ENCODE measurements at regions of chr13 and their contacts with region 1.

Region 1: GRCh38 chr13:106143930-106144709 is 391.3 kb downstream of the EFNB2 start:
- DNase-seq: peak; percentile 88
- ATAC-seq: peak; percentile 48
- H3K4me3 ChIP-seq: no peak overlapping the region
- H3K27ac ChIP-seq: peak overlapping the region; percentile 88
- H3K4me1 ChIP-seq: peaks cover 41% of the 10 kb centered on the region
- H3K27me3 ChIP-seq: no peaks in the 10 kb centered on the region
- CTCF ChIP-seq: no peak

Region 2: GRCh38 chr13:104534847-104535246 is 1609.3 kb before region 1 on chr13:
- CTCF ChIA-PET with region 1: interaction called, 26 read pairs
- POLR2A ChIA-PET with region 1: no interaction called
- intact Hi-C with region 1: no loop called
- DNase-seq: peak; percentile 18
- ATAC-seq: no peak
- H3K4me3 ChIP-seq: no peak overlapping the region
- H3K27ac ChIP-seq: no peak overlapping the region
- H3K4me1 ChIP-seq: no peaks in the 10 kb centered on the region
- H3K27me3 ChIP-seq: no peaks in the 10 kb centered on the region
- CTCF ChIP-seq: peak; percentile 33; the same call in 1 of the 2 replicates

Region 3: GRCh38 chr13:105196052-105196451 is 948.1 kb before region 1 on chr13:
- CTCF ChIA-PET with region 1: no interaction called
- POLR2A ChIA-PET with region 1: no interaction called
- intact Hi-C with region 1: no loop called
- DNase-seq: peak; percentile 11
- ATAC-seq: no peak
- H3K4me3 ChIP-seq: no peak overlapping the region
- H3K27ac ChIP-seq: no peak overlapping the region
- H3K4me1 ChIP-seq: no peaks in the 10 kb centered on the region
- H3K27me3 ChIP-seq: no peaks in the 10 kb centered on the region
- CTCF ChIP-seq: no peak

Region 4: DNA sequence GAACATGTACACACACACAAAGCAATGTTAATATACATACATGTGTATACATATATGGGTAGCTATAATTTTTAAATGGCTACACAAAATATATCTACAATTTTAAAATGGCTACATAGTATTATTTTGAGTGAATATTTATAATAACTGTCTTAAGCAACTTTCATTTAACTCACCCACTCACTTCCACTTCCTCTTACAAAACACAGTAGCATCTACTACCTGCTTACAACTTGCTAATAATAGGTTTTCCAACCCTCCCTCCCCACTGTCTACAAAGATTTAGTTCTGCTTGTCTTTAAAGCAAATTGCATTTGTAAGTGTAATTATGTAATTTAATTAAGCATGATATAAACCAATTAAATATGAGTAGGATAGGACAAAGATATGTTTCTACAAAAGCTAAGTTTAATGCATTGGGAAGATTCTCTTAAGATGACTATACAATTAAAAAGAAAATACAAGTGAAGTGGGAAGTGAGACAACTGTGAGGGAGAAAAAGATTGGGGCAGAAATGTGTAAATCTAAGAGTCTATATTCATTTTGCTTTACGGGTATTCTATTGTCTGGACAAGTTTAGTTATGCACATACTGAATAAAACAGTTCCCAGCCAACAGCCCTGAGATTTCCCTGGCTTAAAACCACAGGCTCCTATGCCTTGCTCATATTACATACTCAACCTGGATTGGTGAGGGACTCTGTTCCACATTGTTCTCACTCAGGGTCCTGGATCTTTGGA is 191.7 kb before region 1 on chr13:
- CTCF ChIA-PET with region 1: no interaction called
- POLR2A ChIA-PET with region 1: no interaction called
- intact Hi-C with region 1: no loop called
- DNase-seq: no peak
- ATAC-seq: no peak
- H3K4me3 ChIP-seq: no peak overlapping the region
- H3K27ac ChIP-seq: no peak overlapping the region
- H3K4me1 ChIP-seq: no peaks in the 10 kb centered on the region
- H3K27me3 ChIP-seq: no peaks in the 10 kb centered on the region
- CTCF ChIP-seq: no peak

Region 5: DNA sequence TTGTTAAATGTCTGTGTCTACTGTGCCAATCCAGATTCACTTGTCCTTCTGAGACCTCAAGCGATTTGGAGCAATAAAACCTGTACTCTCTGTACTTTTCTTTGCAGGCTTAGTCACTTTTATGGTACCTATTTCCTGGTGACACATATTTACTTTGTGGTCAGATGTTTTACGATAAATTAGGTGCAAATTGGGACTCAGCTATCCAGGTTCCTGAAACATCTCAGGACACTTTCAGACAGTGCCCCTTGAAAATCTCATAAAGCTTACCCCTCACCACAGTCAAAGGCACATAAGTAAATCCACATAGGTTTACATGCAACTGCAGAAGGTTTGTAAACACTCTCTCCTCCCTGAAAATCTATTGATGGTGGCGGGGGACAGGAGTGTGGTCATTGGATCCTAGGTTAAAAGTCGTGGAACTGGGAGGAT is 47.4 kb before region 1 on chr13:
- CTCF ChIA-PET with region 1: no interaction called
- POLR2A ChIA-PET with region 1: no interaction called
- intact Hi-C with region 1: loop called (anchors 2 kb)
- DNase-seq: peak; percentile 90
- ATAC-seq: peak; percentile 72
- H3K4me3 ChIP-seq: peak overlapping the region; percentile 34; the same call in 1 of the 2 replicates
- H3K27ac ChIP-seq: peak overlapping the region; percentile 95
- H3K4me1 ChIP-seq: peaks cover 65% of the 10 kb centered on the region
- H3K27me3 ChIP-seq: no peaks in the 10 kb centered on the region
- CTCF ChIP-seq: no peak

Region 6: DNA sequence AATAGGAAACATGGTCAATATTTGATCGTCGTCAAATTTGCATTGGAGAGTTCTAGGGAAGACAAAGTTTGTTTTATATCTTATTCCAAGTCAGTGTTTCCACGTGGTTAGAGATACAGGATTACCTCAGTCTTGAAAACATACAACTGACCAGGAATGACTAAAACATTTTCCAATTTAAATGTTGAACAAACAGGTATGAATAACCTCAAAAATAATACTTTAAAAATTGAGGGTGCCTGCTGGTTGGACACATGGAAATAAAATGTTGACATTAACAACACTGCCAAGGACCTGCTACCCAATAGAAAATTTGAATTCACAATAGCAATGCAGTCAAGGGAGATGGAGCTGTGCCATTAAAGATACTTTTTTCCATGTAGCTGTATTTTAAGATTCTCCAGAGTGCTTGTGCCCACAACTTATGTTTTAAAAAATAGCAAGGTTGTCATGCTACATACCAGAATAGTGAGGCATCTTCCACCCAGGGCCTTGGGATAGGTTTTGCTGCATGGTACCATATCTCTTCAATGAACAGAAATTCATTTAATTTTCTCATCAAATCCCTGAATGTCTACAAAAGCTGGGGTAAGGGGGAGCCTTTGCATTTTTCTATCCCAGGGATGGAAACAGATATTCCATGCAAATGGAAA is 130.6 kb after region 1 on chr13:
- CTCF ChIA-PET with region 1: interaction called, 11 read pairs
- POLR2A ChIA-PET with region 1: no interaction called
- intact Hi-C with region 1: no loop called
- DNase-seq: peak; percentile 31
- ATAC-seq: no peak
- H3K4me3 ChIP-seq: no peak overlapping the region
- H3K27ac ChIP-seq: no peak overlapping the region
- H3K4me1 ChIP-seq: peaks cover 17% of the 10 kb centered on the region
- H3K27me3 ChIP-seq: no peaks in the 10 kb centered on the region
- CTCF ChIP-seq: no peak

Region 7: DNA sequence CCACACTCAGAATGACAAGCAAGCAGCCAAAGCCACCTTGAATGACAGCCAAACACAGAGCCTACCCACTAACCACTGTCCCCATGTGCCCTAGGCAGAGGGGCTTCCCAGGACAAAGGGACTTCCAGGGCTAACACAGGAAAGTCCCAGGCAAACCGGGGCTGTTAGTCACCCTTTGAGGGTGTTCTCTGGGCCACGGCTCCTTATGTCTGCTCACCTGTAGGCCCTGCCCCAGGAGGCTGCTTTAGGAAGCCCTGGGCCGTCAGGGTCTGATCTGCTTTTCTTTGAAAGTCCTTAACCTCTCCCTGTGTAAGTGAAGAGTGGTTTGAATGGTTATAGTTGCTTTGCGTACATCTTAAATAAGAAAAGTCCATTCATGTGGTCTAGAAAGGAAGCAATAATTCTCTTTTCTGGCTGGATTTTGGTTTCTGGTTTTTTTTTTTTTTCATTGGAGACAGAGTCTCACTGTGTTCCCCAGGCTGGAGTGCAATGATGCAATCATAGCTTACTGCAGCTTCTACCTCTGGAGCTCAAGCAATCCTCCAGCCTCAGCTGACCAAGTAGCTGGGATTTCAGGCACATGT is 230.0 kb after region 1 on chr13:
- CTCF ChIA-PET with region 1: no interaction called
- POLR2A ChIA-PET with region 1: no interaction called
- intact Hi-C with region 1: loop called (anchors 10 kb)
- DNase-seq: no peak
- ATAC-seq: no peak
- H3K4me3 ChIP-seq: no peak overlapping the region
- H3K27ac ChIP-seq: no peak overlapping the region
- H3K4me1 ChIP-seq: peaks cover 22% of the 10 kb centered on the region
- H3K27me3 ChIP-seq: no peaks in the 10 kb centered on the region
- CTCF ChIP-seq: no peak